Left ventricle myocardium superior (tissue), 1 donor: ENCODE measurements at regions of chr9 and their contacts with region 1.

Region 1: DNA sequence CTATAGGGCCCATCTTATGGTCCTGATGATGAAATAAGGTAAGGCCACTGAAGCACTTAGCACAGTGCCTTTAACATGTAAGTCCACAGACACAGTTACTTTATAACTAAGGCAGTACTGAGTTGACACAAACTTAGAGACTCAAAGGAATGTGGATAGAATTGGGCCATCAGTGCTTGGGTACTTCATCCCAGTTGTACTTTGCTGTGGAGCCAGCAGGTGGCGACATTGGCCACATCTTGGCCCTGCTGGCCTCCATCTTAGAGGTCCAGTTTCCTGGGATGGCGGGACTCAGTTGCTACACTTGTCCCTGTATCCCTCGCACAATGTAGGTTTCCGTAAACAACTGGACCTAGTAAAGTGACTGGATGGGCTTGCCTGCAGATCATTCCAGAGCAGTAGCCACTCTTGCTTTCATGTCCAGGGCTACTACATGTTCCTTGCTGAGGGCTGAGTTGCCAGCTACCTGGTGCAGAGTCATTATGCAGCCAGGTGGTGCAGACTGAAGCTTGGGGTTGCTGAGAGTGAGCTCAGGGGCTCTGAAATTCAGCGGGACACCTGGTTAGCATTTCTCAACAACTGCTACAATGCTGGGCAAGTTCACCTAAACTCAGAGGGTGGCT is 10.6 kb downstream of the MTAP start:
- DNase-seq: peak; percentile 74
- ATAC-seq: peak; percentile 72

Region 2: GRCh38 chr9:21688108-21689102 is 124.7 kb before region 1 on chr9:
- intact Hi-C with region 1: no loop called
- DNase-seq: peak; percentile 34
- ATAC-seq: peak; percentile 39

Region 3: DNA sequence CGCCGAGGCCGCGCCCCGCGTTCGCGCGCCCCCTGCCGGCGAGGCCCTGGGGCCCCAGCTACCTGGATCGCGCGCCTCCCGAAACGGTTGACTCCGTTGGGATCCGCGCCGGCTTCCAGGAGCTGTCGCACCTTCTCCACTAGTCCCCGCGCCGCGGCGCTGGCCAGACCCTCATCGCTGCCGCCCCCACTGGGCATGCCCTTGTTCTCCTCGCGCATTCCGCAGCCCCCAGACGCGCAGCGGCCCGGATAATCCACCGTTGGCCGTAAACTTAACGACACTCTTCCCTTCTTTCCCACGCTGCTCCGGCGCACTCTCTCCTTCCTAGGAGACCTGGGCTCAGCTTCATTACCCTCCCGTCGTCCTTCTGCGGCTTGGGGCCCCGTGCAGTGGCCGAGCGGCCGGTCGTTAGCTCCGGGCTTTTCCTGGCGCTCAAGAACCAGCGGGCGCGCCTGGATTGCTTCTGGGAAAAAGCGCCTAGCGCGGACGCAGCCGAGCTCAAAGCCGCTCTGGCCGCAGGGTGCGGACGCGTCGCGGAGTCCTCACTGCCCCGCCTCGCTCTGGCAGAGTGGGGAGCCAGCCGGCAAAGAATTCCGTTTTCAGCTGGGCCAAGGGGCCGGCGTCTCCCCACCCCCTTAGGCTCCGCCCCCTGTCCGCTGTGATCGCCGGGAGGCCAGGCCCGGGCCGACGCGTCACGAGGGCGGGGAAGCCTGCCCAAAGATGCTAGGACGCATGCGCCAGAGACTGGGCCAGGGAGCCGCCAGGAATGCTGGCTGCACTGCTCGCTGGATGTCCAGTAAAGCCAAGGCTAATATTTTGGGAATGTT is 195.9 kb after region 1 on chr9 and contains the start of gene CDKN2B:
- intact Hi-C with region 1: loop called (anchors 5 kb)
- DNase-seq: peak; percentile 98
- ATAC-seq: peak; percentile 100
- total RNA-seq, gene CDKN2B: 1.8 TPM

Region 4: DNA sequence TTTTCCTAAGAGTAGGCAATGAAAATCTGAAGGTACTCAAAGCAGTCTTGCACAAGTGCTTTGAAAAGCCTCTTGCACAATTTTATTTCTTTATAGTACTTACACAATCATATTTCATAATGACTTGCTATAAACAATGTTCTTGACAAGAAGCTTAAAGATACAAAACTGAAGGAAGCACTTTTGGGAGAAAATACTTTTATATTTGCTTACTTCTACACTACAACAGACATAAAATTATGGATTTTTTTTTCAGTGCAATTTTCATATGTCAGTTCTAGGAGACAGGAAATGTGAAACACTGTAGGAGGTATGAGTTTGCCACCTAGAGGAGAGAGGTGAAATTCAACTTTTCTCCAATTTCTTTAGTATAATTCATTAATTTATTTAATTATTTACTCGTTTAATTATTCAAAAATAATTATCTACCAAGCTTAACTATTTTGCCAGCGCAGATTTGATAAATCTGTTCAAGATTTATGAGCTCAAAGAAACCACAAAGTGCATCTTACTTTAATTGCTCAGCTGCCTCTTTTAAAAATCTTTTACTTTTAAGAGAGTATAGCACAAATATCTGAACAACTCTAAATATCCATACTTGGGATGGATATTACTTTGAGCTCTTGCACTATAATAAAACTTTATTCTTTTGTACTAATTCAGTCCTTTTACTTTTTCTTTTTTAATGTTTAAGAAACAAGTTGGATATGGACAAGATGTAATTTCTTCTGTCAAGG is 225.1 kb after region 1 on chr9:
- intact Hi-C with region 1: loop called (anchors 5 kb)
- DNase-seq: no peak
- ATAC-seq: no peak

Region 5: GRCh38 chr9:22228542-22228941 is 415.5 kb after region 1 on chr9:
- intact Hi-C with region 1: loop called (anchors 5 kb)
- DNase-seq: no peak
- ATAC-seq: no peak

Region 6: GRCh38 chr9:22238809-22239684 is 426.0 kb after region 1 on chr9:
- intact Hi-C with region 1: loop called (anchors 5 kb)
- DNase-seq: no peak
- ATAC-seq: no peak

Region 7: DNA sequence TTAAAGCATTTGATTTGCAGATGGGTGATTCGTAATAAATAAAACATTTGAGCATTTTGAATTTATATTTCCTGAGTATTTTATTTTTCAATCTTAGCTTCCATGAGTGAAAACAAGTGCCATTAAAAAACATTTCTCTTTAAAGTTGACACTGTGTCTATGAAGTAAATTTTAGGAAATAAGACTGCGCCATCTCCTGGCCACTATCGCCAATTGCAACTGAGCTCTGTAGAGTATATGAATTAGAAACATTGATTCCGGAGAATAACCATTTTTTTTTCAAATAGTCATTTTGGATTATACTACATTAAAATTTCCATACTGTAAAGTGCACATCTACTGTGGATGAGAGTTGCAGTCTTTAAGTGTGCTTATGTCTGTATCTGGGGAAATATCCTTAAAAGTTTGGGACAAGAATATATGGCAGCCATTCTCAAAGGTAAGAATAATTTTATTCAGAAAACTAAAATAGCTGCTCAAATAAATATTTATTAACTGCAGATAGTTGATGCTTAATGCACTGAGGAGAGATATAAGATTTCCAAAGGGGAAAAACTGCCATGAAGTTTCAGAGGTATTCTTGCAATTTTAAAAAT is 639.5 kb after region 1 on chr9:
- intact Hi-C with region 1: loop called (anchors 5 kb)
- DNase-seq: peak; percentile 51
- ATAC-seq: no peak